ENCODE measurements at regions of chr5 and their contacts with region 1.

Region 1: GRCh38 chr5:181223058-181223728 is at the start of gene TRIM41:
- DNase-seq: peak; percentile 96
- ATAC-seq: peak; percentile 63
- H3K4me3 Mint-ChIP-seq: peak within 1 kb of the TSS; percentile 87
- H3K27ac Mint-ChIP-seq: peak within 1 kb of the TSS; percentile 99
- H3K4me1 Mint-ChIP-seq: peaks cover 51% of the 10 kb centered on the region
- H3K27me3 Mint-ChIP-seq: peaks cover 3% of the 10 kb centered on the region
- total RNA-seq, gene TRIM41: 44.5 to 49.7 TPM

Region 2: DNA sequence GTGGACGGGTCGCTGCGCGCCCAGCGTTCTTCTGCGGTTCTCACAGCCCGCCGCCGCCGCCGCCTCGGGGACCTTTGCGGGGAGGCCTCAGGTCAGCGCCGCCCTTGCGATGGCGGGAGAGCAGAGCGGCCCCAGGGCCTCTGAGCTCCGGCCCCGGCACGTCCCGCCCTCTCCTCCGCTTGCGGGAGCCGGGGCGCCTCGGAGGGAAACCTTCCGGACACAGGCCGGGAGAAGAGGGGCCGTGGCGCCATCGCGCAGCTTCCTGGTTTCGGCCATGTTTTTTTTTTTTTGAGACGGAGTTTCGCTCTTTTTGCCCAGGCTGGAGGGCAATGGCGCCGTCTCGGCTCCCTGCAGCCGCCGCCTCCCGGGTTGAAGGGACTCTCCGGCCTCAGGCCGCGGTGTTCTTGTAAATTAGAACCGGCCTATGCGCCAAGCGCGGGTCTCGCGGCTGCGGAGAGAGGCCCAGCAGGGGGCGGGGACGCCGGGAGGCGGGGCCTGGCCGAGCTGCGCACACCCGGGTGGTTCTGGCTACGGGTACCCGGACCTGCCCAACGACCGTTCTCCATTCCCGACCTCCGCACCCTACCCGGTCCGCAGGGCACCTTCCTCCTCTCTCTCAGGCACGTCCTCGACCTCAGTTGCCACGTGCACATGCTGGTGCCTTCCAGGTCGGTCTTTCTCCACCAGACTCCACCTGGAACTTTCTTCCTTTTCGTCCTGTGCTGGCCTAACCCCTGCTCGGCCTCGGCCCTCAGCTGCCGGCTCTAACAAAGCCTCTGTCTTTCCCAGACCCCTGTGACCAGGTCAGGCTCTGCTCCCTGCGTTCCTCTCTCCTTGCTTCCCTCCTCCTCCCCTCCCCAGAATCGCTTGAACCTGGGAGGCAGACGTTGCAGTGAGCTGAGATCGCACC is 391.8 kb before region 1 on chr5:
- POLR2A ChIA-PET with region 1: interaction called, 12 read pairs
- DNase-seq: peak; percentile 87
- ATAC-seq: peak; percentile 68
- H3K4me3 Mint-ChIP-seq: peak overlapping the region; percentile 98
- H3K27ac Mint-ChIP-seq: peak overlapping the region; percentile 97
- H3K4me1 Mint-ChIP-seq: peaks cover 30% of the 10 kb centered on the region
- H3K27me3 Mint-ChIP-seq: no peaks in the 10 kb centered on the region

Region 3: GRCh38 chr5:181005791-181006190 is 217.4 kb before region 1 on chr5:
- POLR2A ChIA-PET with region 1: no interaction called
- DNase-seq: no peak
- ATAC-seq: no peak
- H3K4me3 Mint-ChIP-seq: no peak overlapping the region
- H3K27ac Mint-ChIP-seq: no peak overlapping the region
- H3K4me1 Mint-ChIP-seq: no peaks in the 10 kb centered on the region
- H3K27me3 Mint-ChIP-seq: peaks cover 4% of the 10 kb centered on the region

Region 4: GRCh38 chr5:181191529-181192394 is 31.4 kb before region 1 on chr5:
- POLR2A ChIA-PET with region 1: interaction called, 57 read pairs
- DNase-seq: peak; percentile 97
- ATAC-seq: peak; percentile 56
- H3K4me3 Mint-ChIP-seq: peak overlapping the region; percentile 94
- H3K27ac Mint-ChIP-seq: peak overlapping the region; percentile 96
- H3K4me1 Mint-ChIP-seq: peaks cover 40% of the 10 kb centered on the region
- H3K27me3 Mint-ChIP-seq: peaks cover 4% of the 10 kb centered on the region

Region 5: DNA sequence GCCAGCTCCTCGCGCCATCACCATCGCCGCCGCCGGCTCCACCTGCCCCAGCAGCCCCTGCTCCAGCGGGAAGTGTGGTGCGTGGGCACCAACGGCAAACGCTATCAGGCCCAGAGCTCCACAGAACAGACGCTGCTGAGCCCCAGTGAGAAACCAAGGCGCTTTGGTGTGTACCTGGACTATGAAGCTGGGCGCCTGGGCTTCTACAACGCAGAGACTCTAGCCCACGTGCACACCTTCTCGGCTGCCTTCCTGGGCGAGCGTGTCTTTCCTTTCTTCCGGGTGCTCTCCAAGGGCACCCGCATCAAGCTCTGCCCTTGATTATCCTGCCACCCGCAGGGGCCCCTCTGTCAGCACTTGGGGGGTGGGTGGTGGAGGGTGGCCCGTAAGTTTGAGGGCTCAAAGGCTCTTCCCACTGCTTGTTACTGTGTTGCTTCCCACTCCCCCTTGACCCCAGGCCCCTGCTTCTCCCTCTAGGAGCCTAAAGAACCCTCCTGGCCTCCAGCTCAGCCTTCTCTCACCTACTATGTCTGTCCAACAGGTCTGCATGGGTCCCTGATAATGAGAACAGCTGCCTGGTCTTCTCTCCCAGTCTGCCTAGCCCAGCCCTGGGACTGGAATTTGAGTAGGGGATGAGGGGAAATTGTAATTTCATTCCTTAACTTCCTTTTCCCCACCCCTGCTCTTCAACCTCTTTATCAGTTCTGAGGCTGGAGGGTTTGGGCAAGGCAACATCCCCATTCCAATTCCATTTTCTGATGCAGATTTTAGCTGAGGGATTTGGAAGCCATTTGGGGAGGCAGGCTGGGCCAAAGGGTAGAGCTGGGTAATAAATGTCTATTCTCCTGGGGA is 11.5 kb after region 1 on chr5:
- POLR2A ChIA-PET with region 1: interaction called, 82 read pairs
- DNase-seq: no peak
- ATAC-seq: no peak
- H3K4me3 Mint-ChIP-seq: no peak overlapping the region
- H3K27ac Mint-ChIP-seq: peak overlapping the region; percentile 36
- H3K4me1 Mint-ChIP-seq: peaks cover 22% of the 10 kb centered on the region
- H3K27me3 Mint-ChIP-seq: no peaks in the 10 kb centered on the region

Region 6: GRCh38 chr5:181260387-181261319 is 37.5 kb after region 1 on chr5 and contains the start of gene TRIM52:
- POLR2A ChIA-PET with region 1: interaction called, 80 read pairs
- DNase-seq: peak; percentile 91
- ATAC-seq: peak; percentile 86
- H3K4me3 Mint-ChIP-seq: peak within 1 kb of the TSS; percentile 97
- H3K27ac Mint-ChIP-seq: peak within 1 kb of the TSS; percentile 93
- H3K4me1 Mint-ChIP-seq: peaks cover 38% of the 10 kb centered on the region
- H3K27me3 Mint-ChIP-seq: no peaks in the 10 kb centered on the region
- total RNA-seq, gene TRIM52: 43.0 to 43.5 TPM